Heart right ventricle (tissue), 16 donors: ENCODE measurements at regions of chr1 and their contacts with region 1.

Region 1: GRCh38 chr1:6245086-6245868 is 1.3 kb downstream of the HES3 start:
- DNase-seq: peak; percentile 65 to 86
- ATAC-seq: peak; percentile 73 to 85 (median 78)
- H3K4me3 ChIP-seq: peak overlapping the region in 1 of 10 donors; percentile 3
- H3K27ac ChIP-seq: no peak overlapping the region
- H3K4me1 ChIP-seq: peaks cover 0 to 48% (median 34%) of the 10 kb centered on the region in 9 donors
- H3K27me3 ChIP-seq: peaks cover 24 to 96% (median 93%) of the 10 kb centered on the region in 7 donors
- CTCF ChIP-seq: peak; percentile 70 to 89 (median 82)

Region 2: GRCh38 chr1:6108937-6109614 is 136.2 kb before region 1 on chr1:
- intact Hi-C with region 1: loop called in 2 of 10 experiments (anchors 2 to 5 kb)
- DNase-seq: peak in 1 of 2 donors; percentile 17
- ATAC-seq: peak in 5 of 8 donors; percentile 20 to 60 (median 51)
- H3K4me3 ChIP-seq: no peak overlapping the region
- H3K27ac ChIP-seq: no peak overlapping the region
- H3K4me1 ChIP-seq: no peaks in the 10 kb centered on the region
- H3K27me3 ChIP-seq: peaks cover 0 to 51% (median 31%) of the 10 kb centered on the region in 7 donors
- CTCF ChIP-seq: peak in 7 of 9 donors; percentile 23 to 52 (median 35)

Region 3: GRCh38 chr1:6280761-6281451 is 35.6 kb after region 1 on chr1:
- intact Hi-C with region 1: loop called in 1 of 10 experiments (anchors 5 kb)
- DNase-seq: no peak
- ATAC-seq: peak in 3 of 8 donors; percentile 12 to 32 (median 24)
- H3K4me3 ChIP-seq: no peak overlapping the region
- H3K27ac ChIP-seq: no peak overlapping the region
- H3K4me1 ChIP-seq: peaks cover 4 to 13% (median 11%) of the 10 kb centered on the region in 9 donors
- H3K27me3 ChIP-seq: no peaks in the 10 kb centered on the region
- CTCF ChIP-seq: peak in 8 of 9 donors; percentile 8 to 56 (median 43)

Region 4: GRCh38 chr1:6401673-6402072 is 156.4 kb after region 1 on chr1:
- intact Hi-C with region 1: loop called in 9 of 10 experiments (anchors 1 to 10 kb)
- DNase-seq: no peak
- ATAC-seq: no peak
- H3K4me3 ChIP-seq: no peak overlapping the region
- H3K27ac ChIP-seq: no peak overlapping the region
- H3K4me1 ChIP-seq: no peaks in the 10 kb centered on the region
- H3K27me3 ChIP-seq: peaks cover 0 to 14% (median 0%) of the 10 kb centered on the region in 7 donors
- CTCF ChIP-seq: no peak

Region 5: GRCh38 chr1:6414443-6414844 is 169.2 kb after region 1 on chr1:
- intact Hi-C with region 1: loop called in 5 of 10 experiments (anchors 5 to 10 kb)
- DNase-seq: no peak
- ATAC-seq: peak in 3 of 8 donors; percentile 35 to 65 (median 61)
- H3K4me3 ChIP-seq: no peak overlapping the region
- H3K27ac ChIP-seq: no peak overlapping the region
- H3K4me1 ChIP-seq: peaks cover 5 to 12% (median 8%) of the 10 kb centered on the region in 9 donors
- H3K27me3 ChIP-seq: peaks cover 31 to 94% (median 76%) of the 10 kb centered on the region in 7 donors
- CTCF ChIP-seq: peak in 8 of 9 donors; percentile 27 to 54 (median 48)

Region 6: DNA sequence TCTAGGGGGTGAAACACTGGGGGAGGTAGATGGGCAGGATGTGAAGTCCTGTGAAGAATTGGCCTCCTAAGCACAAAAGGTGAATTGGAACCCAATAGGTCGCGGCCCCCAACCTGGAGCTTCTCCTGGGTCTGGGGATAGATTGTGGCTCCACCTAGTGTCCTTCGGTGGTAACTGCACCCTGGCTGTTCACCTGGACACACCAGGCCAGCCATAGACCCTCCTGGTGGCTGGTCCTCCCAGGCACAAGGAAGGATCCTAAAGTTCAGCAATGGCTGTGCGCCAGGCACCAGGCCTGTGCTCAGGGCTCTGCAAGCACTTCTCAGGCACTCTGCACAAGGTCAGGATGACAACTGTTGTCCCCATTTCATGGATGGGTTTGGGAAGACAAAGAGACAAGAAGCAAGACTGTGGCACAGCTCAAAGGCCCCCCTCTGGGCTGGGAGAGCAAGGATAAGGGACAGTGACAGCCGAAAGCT is 192.8 kb after region 1 on chr1:
- intact Hi-C with region 1: loop called in 4 of 10 experiments (anchors 2 to 10 kb)
- DNase-seq: peak; percentile 52 to 61
- ATAC-seq: peak in 7 of 8 donors; percentile 57 to 84 (median 76)
- H3K4me3 ChIP-seq: no peak overlapping the region
- H3K27ac ChIP-seq: no peak overlapping the region
- H3K4me1 ChIP-seq: peaks cover 0 to 3% (median 0%) of the 10 kb centered on the region in 9 donors
- H3K27me3 ChIP-seq: peaks cover 15 to 58% (median 52%) of the 10 kb centered on the region in 7 donors
- CTCF ChIP-seq: peak; percentile 83 to 97 (median 92)

Region 7: GRCh38 chr1:6448749-6449631 is 203.7 kb after region 1 on chr1:
- intact Hi-C with region 1: no loop called
- DNase-seq: no peak
- ATAC-seq: peak in 1 of 8 donors; percentile 40
- H3K4me3 ChIP-seq: peak overlapping the region in 1 of 10 donors; percentile 13
- H3K27ac ChIP-seq: no peak overlapping the region
- H3K4me1 ChIP-seq: peaks cover 0 to 22% (median 11%) of the 10 kb centered on the region in 9 donors
- H3K27me3 ChIP-seq: peaks cover 28 to 97% (median 84%) of the 10 kb centered on the region in 7 donors
- CTCF ChIP-seq: peak in 2 of 9 donors; percentile 13 to 25